SK-N-SH (cell line): ENCODE measurements at regions of chr7 and their contacts with region 1.

Region 1: DNA sequence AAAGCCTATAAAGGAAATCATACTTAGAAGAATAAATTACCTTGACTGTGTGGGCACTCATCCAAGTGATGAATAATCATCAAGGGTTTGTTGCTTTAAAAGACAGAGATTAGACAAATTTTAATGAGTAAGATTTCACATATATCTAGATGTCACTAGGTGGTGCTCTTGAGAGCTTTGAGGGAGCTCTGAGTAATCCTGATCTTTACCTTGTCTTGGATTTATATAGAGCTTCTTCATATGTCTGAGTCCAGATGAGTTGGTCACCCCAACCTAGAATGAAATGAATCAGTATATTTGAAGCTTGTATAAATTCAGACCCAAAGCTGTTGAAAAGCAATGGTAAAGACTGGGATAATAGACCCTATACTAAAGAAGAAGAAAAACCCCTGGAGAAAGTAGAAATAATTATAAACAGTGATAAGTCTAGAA is 3.7 kb downstream of the AGR2 start:
- DNase-seq: peak; percentile 42
- H3K4me3 ChIP-seq: no peak overlapping the region
- H3K27ac ChIP-seq: no peak overlapping the region
- H3K4me1 ChIP-seq: no peaks in the 10 kb centered on the region
- H3K27me3 ChIP-seq: no peaks in the 10 kb centered on the region; the same call in 1 of the 2 replicates
- CTCF ChIP-seq: peak; percentile 80
- EP300 ChIP-seq: no peak
- RAD21 ChIP-seq: peak; percentile 68

Region 2: DNA sequence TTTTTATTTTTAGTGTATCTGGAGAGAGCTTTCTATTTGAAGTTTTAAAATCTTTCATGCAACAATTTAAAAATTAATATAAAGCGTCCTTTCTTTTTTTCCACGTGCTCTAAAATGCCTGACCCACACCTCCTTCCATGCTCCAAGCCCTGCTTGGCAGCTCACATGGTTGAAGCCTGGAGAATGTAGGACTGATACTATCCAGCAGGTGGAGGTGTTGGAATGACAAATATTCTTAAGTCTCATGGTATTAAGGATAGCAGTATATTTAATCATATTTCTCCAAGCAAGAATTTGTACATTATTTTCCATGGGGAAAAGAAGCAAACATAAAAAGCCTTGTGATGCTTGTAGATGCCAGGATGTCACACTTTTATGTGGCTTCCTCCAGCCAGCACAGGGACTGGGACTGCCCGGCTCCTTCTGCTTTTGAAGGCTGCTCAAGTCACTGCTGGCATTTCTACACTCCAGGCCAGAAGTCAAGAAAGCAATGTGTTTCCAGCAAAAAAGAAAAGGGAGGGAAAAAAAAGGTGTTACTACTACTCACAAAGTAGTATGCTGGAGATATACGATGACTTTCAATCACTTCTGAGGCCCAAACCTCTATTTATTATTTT is 105.4 kb before region 1 on chr7:
- CTCF ChIA-PET with region 1: interaction called, 14 read pairs
- POLR2A ChIA-PET with region 1: no interaction called
- DNase-seq: peak; percentile 39
- H3K4me3 ChIP-seq: no peak overlapping the region
- H3K27ac ChIP-seq: no peak overlapping the region
- H3K4me1 ChIP-seq: peaks cover 0 to 20% of the 10 kb centered on the region in 2 experiments; a peak in 1 of 4 replicates
- H3K27me3 ChIP-seq: no peaks in the 10 kb centered on the region
- CTCF ChIP-seq: peak; percentile 77
- EP300 ChIP-seq: no peak
- RAD21 ChIP-seq: peak; percentile 76

Region 3: GRCh38 chr7:16719699-16720098 is 81.4 kb before region 1 on chr7:
- CTCF ChIA-PET with region 1: no interaction called
- POLR2A ChIA-PET with region 1: no interaction called
- DNase-seq: no peak
- H3K4me3 ChIP-seq: no peak overlapping the region
- H3K27ac ChIP-seq: no peak overlapping the region
- H3K4me1 ChIP-seq: no peaks in the 10 kb centered on the region
- H3K27me3 ChIP-seq: no peaks in the 10 kb centered on the region
- CTCF ChIP-seq: no peak
- EP300 ChIP-seq: no peak
- RAD21 ChIP-seq: no peak

Region 4: DNA sequence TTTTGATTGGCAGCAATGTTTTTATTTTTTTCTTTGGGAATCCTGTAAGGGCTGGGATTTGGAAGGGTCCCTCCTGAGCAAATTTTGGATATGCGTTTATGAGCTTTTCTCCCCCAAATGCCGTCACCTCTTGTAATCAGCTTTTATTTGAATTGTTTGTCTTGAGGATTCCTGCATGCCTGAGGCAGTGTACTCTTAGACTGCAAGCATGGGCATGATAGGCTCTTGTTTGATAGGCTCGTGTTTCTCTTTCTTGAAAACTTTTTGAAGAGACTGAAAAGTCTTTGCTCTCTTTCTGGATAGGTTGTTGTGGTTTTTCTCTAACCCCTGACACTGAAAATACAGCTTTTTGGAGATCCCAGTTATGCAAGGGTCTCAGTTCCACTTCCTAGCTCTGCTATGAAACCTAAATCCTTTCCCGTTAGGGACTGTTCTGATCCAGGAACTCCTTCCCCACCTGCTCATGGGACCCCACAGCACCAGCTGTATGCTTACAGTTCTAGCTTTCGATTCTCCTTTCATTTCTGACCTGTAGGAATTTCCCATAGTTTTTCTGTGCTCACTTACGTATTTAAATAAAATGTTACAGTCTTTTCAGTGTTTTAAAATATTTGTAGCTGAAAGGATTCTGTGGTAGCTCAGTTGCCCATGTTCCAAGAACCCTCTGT is 30.3 kb before region 1 on chr7:
- CTCF ChIA-PET with region 1: interaction called, 14 read pairs
- POLR2A ChIA-PET with region 1: no interaction called
- DNase-seq: no peak
- H3K4me3 ChIP-seq: no peak overlapping the region
- H3K27ac ChIP-seq: no peak overlapping the region
- H3K4me1 ChIP-seq: 0 out of 4 replicates have a peak, but pooled peaks cover 0 to 1% of the 10 kb centered on the region in 2 experiments
- H3K27me3 ChIP-seq: no peaks in the 10 kb centered on the region
- CTCF ChIP-seq: no peak
- EP300 ChIP-seq: no peak
- RAD21 ChIP-seq: no peak

Region 5: GRCh38 chr7:16780596-16780995 is 20.5 kb before region 1 on chr7:
- CTCF ChIA-PET with region 1: interaction called, 14 read pairs
- POLR2A ChIA-PET with region 1: no interaction called
- DNase-seq: no peak
- H3K4me3 ChIP-seq: no peak overlapping the region
- H3K27ac ChIP-seq: no peak overlapping the region
- H3K4me1 ChIP-seq: no peaks in the 10 kb centered on the region; a peak in 1 of 4 replicates
- H3K27me3 ChIP-seq: no peaks in the 10 kb centered on the region
- CTCF ChIP-seq: no peak
- EP300 ChIP-seq: no peak
- RAD21 ChIP-seq: no peak

Region 6: DNA sequence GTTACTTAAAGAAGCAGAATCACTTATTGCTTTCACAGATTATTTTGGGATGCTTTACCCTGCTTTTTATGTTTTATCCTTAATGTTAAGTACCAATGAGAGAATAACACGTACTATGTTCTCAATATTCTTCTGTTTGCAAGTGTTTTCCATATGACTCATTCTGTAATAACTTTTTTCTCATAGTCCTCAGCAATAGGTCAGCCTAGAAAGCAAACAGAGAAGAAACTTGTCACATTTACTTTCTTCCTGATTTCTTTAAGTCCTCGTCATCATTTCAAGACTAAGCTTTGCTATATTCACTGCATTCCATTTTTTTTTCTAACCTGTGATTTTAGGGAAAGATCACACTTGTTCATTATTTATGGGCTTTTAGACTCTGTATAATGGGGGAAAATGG is 10.4 kb after region 1 on chr7:
- CTCF ChIA-PET with region 1: interaction called, 25 read pairs
- POLR2A ChIA-PET with region 1: no interaction called
- DNase-seq: no peak
- H3K4me3 ChIP-seq: no peak overlapping the region
- H3K27ac ChIP-seq: no peak overlapping the region
- H3K4me1 ChIP-seq: no peaks in the 10 kb centered on the region; a peak in 1 of 4 replicates
- H3K27me3 ChIP-seq: peaks cover 19% of the 10 kb centered on the region; the same call in 1 of the 2 replicates
- CTCF ChIP-seq: no peak
- EP300 ChIP-seq: no peak
- RAD21 ChIP-seq: no peak

Region 7: DNA sequence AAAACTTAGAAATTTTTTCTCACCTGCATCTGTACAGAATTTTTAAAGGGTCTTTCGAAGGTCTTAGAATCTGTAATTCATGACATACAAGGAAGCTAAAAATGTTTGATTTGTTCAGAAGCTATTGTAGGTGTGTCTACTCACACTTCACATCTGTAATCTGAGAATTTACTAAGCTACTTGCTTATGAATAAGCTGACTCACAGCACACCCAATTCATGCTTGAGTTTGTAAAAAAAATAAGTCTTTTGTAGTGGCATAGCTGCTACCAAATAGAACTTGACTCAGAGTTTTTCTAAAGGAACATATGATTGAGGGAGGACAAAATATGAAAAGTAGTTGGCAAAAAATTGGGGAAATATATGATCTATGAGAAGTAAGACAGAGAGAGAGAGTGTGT is 16.4 kb after region 1 on chr7:
- CTCF ChIA-PET with region 1: interaction called, 25 read pairs
- POLR2A ChIA-PET with region 1: no interaction called
- DNase-seq: no peak
- H3K4me3 ChIP-seq: no peak overlapping the region
- H3K27ac ChIP-seq: no peak overlapping the region
- H3K4me1 ChIP-seq: no peaks in the 10 kb centered on the region
- H3K27me3 ChIP-seq: peaks cover 15% of the 10 kb centered on the region; the same call in 1 of the 2 replicates
- CTCF ChIP-seq: no peak
- EP300 ChIP-seq: no peak
- RAD21 ChIP-seq: no peak

Region 8: GRCh38 chr7:16918288-16918895 is 117.3 kb after region 1 on chr7:
- CTCF ChIA-PET with region 1: interaction called, 27 read pairs
- POLR2A ChIA-PET with region 1: no interaction called
- DNase-seq: peak; percentile 38
- H3K4me3 ChIP-seq: no peak overlapping the region; a peak in 1 of 4 replicates
- H3K27ac ChIP-seq: no peak overlapping the region
- H3K4me1 ChIP-seq: peaks cover 0 to 18% of the 10 kb centered on the region in 2 experiments; a peak in 1 of 4 replicates
- H3K27me3 ChIP-seq: no peaks in the 10 kb centered on the region
- CTCF ChIP-seq: peak; percentile 97
- EP300 ChIP-seq: no peak
- RAD21 ChIP-seq: peak; percentile 80